Breast epithelium (tissue), 4 donors: ENCODE measurements at regions of chr1 and their contacts with region 1.

Region 1: DNA sequence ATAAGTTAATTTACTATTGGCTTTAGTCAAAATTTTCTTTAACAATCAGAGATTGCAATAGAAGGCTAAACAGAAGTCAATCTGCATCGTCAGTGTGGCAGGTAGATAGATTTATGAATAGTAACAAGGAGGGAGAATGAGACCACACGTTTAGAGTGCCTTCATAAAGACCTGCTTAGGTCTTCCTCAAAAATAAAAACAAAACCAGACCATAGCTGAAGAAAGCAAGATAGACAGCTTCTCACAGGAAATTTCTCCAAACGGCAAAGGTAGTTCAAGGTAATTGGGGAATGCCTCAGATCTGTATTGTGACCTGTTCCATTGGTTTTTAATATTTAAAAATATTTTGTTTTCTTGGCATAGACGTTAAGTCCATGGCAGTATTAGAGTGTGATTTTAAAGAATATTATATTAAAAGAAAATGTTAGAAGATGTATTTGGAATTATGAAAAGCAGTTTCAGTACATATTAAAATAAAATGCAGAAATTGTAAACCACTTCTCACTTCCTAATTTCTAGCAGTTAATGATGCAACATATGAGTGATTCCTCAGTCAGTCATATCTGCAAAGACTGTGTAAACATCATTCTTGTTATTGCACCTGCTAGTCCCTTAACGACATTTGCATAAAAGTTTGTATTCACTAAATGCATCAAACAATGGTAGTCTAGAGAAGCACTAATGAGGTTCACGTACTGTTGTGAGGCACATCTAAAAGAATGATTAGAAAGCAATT is 278.0 kb downstream of the HLX start:
- DNase-seq: no peak
- H3K4me3 ChIP-seq: no peak overlapping the region
- H3K27ac ChIP-seq: no peak overlapping the region
- H3K4me1 ChIP-seq: no peaks in the 10 kb centered on the region
- H3K27me3 ChIP-seq: no peaks in the 10 kb centered on the region
- CTCF ChIP-seq: no peak
- POLR2A ChIP-seq: no peak

Region 2: DNA sequence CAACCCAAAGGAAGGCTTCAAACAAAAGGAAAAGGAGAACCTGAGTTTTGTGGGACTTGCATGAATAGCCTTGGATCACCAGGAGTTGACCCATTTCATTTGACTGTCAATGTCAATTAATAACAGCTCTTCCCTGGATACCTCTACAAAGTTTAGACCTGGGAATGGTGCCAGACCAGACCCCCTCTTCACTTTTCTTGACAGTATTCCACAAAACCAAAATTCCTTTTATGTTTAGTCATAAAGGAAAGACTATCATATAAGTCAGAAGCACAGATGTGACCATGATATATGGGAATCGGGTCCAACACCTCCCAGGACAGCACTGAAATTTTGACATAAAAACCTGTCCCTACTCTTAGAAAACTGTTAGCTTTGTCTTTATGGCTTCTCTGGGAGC is 1791.7 kb before region 1 on chr1:
- intact Hi-C with region 1: loop called (anchors 10 kb)
- DNase-seq: no peak
- H3K4me3 ChIP-seq: no peak overlapping the region
- H3K27ac ChIP-seq: no peak overlapping the region
- H3K4me1 ChIP-seq: no peaks in the 10 kb centered on the region
- H3K27me3 ChIP-seq: no peaks in the 10 kb centered on the region
- CTCF ChIP-seq: no peak
- POLR2A ChIP-seq: no peak

Region 3: DNA sequence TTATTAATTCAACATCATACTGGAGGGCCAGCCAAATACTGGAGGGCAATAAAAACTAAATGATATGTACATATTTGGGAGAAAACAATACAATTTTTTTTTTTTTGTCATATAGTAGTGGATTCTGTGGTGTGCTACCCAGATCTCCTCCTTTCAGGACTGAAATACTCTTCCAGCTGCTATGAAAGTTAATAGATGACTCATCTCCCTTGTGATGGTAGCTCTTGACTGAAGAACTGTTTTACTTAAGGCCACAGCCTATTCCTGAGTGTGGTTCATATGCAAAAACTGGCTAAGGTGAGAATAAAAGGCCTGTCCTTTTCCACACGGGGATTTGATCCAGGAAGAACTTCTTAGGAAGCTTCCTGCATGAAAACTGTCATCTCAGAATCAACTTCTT is 30.0 kb after region 1 on chr1:
- intact Hi-C with region 1: no loop called
- DNase-seq: no peak
- H3K4me3 ChIP-seq: no peak overlapping the region
- H3K27ac ChIP-seq: no peak overlapping the region
- H3K4me1 ChIP-seq: no peaks in the 10 kb centered on the region
- H3K27me3 ChIP-seq: no peaks in the 10 kb centered on the region
- CTCF ChIP-seq: no peak
- POLR2A ChIP-seq: no peak